ENCODE measurements at regions of chr3 and their contacts with region 1.

Region 1: GRCh38 chr3:30012941-30013543 is 593.4 kb upstream of the TGFBR2 start:
- DNase-seq: peak; percentile 8
- ATAC-seq: peak; percentile 69
- H3K4me3 ChIP-seq: no peak overlapping the region
- H3K27ac ChIP-seq: no peak overlapping the region
- H3K4me1 ChIP-seq: no peaks in the 10 kb centered on the region
- H3K27me3 ChIP-seq: no peaks in the 10 kb centered on the region
- CTCF ChIP-seq: peak; percentile 48 to 61 (median 48)
- EP300 ChIP-seq: no peak
- POLR2A ChIP-seq: no peak
- RAD21 ChIP-seq: peak; percentile 54

Region 2: GRCh38 chr3:29746163-29746562 is 266.9 kb before region 1 on chr3:
- CTCF ChIA-PET with region 1: no interaction called
- POLR2A ChIA-PET with region 1: no interaction called
- RAD21 ChIA-PET with region 1: no interaction called
- SMC1A ChIA-PET with region 1: no interaction called
- in situ Hi-C with region 1: no loop called
- intact Hi-C with region 1: no loop called
- DNase-seq: no peak
- ATAC-seq: no peak
- H3K4me3 ChIP-seq: no peak overlapping the region
- H3K27ac ChIP-seq: no peak overlapping the region
- H3K4me1 ChIP-seq: no peaks in the 10 kb centered on the region
- H3K27me3 ChIP-seq: no peaks in the 10 kb centered on the region
- CTCF ChIP-seq: no peak
- EP300 ChIP-seq: no peak
- POLR2A ChIP-seq: no peak
- RAD21 ChIP-seq: no peak

Region 3: DNA sequence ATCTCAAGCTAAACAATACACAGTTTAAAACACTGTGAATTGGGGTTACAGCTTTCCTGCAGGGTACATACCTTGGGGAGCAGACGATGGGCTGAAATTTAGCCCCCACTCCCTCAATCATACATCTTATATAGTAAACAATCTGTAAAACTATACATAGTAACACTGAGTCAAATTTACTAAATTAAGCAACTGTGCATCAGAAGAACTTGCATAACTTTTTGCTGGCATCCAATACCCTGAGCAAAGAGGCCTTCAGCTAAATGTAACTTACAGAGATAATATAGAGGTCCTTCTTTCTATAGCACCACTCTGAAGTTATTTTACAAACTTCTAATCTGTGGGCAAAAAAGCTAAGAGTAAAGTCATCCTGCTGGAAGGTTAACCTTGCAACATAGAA is 10.2 kb before region 1 on chr3:
- CTCF ChIA-PET with region 1: interaction called, 13 read pairs
- POLR2A ChIA-PET with region 1: no interaction called
- RAD21 ChIA-PET with region 1: no interaction called
- SMC1A ChIA-PET with region 1: interaction called, 3 read pairs
- in situ Hi-C with region 1: no loop called
- intact Hi-C with region 1: no loop called
- DNase-seq: no peak
- ATAC-seq: no peak
- H3K4me3 ChIP-seq: no peak overlapping the region
- H3K27ac ChIP-seq: no peak overlapping the region
- H3K4me1 ChIP-seq: no peaks in the 10 kb centered on the region
- H3K27me3 ChIP-seq: no peaks in the 10 kb centered on the region
- CTCF ChIP-seq: no peak
- EP300 ChIP-seq: no peak
- POLR2A ChIP-seq: no peak
- RAD21 ChIP-seq: no peak

Region 4: DNA sequence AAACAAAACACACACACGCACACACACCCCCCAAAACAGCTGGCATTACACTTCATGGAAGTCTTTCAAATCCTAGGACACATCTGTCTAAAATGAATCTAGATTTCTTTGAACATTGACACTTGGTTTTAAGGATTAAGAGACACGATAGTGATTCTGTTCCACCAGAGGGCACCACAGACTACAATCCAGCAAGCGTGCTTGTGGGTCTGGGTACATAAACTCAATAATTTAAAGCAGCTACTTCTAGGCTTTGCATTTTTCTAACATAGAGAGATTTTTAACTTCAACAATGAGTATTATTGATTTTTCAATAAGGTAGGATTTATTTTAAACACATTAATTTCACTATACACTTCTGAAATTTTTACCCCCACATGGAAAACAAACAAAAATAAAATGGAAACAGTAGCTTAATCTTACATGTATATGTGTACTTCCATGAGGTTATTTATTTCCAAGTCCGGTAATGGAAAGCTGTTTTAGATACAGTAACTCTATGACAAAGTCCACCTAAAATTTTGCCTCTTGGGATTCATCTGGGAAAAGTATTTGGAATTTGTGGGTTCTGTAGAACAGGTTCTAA is 29.3 kb after region 1 on chr3:
- CTCF ChIA-PET with region 1: interaction called, 23 read pairs
- POLR2A ChIA-PET with region 1: no interaction called
- RAD21 ChIA-PET with region 1: interaction called, 3 read pairs
- SMC1A ChIA-PET with region 1: interaction called, 3 read pairs
- in situ Hi-C with region 1: no loop called
- intact Hi-C with region 1: no loop called
- DNase-seq: peak; percentile 1
- ATAC-seq: peak; percentile 88
- H3K4me3 ChIP-seq: no peak overlapping the region
- H3K27ac ChIP-seq: no peak overlapping the region
- H3K4me1 ChIP-seq: no peaks in the 10 kb centered on the region
- H3K27me3 ChIP-seq: no peaks in the 10 kb centered on the region
- CTCF ChIP-seq: peak; percentile 57 to 68 (median 59); a peak in 5 of 6 replicates
- EP300 ChIP-seq: no peak
- POLR2A ChIP-seq: no peak
- RAD21 ChIP-seq: peak; percentile 71

Region 5: DNA sequence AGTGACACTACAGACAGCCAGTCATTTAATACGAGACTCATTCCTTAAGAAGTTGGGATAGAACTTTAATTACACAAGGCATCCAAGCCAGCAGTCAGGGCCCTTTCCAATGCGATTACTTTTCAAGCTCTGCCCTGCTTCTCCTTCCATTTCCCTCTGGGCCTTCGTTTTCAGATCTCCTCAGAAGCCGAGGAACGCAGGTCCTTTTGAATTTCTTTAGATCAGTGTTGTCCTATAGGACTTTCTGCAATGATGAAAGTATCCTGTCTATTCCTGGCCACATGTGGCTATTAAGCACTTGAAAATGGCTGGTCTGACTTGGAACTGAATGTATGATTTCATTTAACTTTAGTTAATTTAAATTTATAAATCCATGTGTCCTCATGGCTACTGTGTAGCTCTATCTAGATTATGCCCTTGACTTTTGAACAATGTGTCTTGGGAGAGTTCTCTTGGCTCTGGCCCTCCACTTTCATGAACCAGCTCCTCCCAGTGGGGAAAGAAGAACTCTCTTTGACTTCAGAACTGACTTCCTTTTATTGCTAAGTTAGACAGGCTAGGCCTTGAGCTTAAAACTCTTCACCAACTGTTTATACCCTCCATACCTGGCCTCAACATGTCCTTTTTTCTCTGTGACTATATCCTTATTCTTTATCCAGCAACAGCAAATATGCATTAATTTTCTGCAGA is 616.0 kb after region 1 on chr3:
- CTCF ChIA-PET with region 1: no interaction called
- POLR2A ChIA-PET with region 1: no interaction called
- RAD21 ChIA-PET with region 1: no interaction called
- SMC1A ChIA-PET with region 1: no interaction called
- in situ Hi-C with region 1: no loop called
- intact Hi-C with region 1: no loop called
- DNase-seq: no peak
- ATAC-seq: no peak
- H3K4me3 ChIP-seq: no peak overlapping the region
- H3K27ac ChIP-seq: no peak overlapping the region
- H3K4me1 ChIP-seq: no peaks in the 10 kb centered on the region
- H3K27me3 ChIP-seq: no peaks in the 10 kb centered on the region
- CTCF ChIP-seq: peak in 1 of 3 experiments; percentile 11; a peak in 1 of 6 replicates
- EP300 ChIP-seq: no peak
- POLR2A ChIP-seq: no peak
- RAD21 ChIP-seq: peak; percentile 19; the same call in 1 of the 2 replicates

Measured in GM12878 (cell line).